Adrenal gland (tissue), 19 donors: ENCODE measurements at regions of chr15 and their contacts with region 1.

Region 1: GRCh38 chr15:82900511-82901060 is 51.9 kb downstream of the HOMER2 start:
- DNase-seq: peak in 1 of 7 donors; percentile 21
- H3K4me3 ChIP-seq: no peak overlapping the region
- H3K27ac ChIP-seq: no peak overlapping the region
- H3K4me1 ChIP-seq: no peaks in the 10 kb centered on the region
- H3K27me3 ChIP-seq: no peaks in the 10 kb centered on the region
- CTCF ChIP-seq: no peak
- POLR2A ChIP-seq: no peak

Region 2: GRCh38 chr15:82650046-82650670 is 250.4 kb before region 1 on chr15:
- intact Hi-C with region 1: no loop called
- DNase-seq: no peak
- H3K4me3 ChIP-seq: no peak overlapping the region
- H3K27ac ChIP-seq: no peak overlapping the region
- H3K4me1 ChIP-seq: peaks cover 12 to 21% of the 10 kb centered on the region in 2 donors
- H3K27me3 ChIP-seq: no peaks in the 10 kb centered on the region
- CTCF ChIP-seq: no peak
- POLR2A ChIP-seq: no peak

Region 3: GRCh38 chr15:82952158-82953081 is 51.8 kb after region 1 on chr15 and contains the start of gene HOMER2:
- intact Hi-C with region 1: loop called in 1 of 2 experiments (anchors 10 kb)
- DNase-seq: peak in 5 of 7 donors; percentile 22 to 43 (median 29)
- H3K4me3 ChIP-seq: peak within 1 kb of the TSS in 2 of 4 donors; percentile 28 to 73
- H3K27ac ChIP-seq: peak within 1 kb of the TSS in 3 of 5 donors; percentile 27 to 61 (median 30)
- H3K4me1 ChIP-seq: peaks cover 0 to 12% of the 10 kb centered on the region in 2 donors
- H3K27me3 ChIP-seq: no peaks in the 10 kb centered on the region
- CTCF ChIP-seq: peak in 1 of 6 experiments; percentile 27
- POLR2A ChIP-seq: peak in 1 of 2 donors; percentile 35
- total RNA-seq, gene HOMER2: 9.0 to 43.1 (median 26.0) TPM

Region 4: DNA sequence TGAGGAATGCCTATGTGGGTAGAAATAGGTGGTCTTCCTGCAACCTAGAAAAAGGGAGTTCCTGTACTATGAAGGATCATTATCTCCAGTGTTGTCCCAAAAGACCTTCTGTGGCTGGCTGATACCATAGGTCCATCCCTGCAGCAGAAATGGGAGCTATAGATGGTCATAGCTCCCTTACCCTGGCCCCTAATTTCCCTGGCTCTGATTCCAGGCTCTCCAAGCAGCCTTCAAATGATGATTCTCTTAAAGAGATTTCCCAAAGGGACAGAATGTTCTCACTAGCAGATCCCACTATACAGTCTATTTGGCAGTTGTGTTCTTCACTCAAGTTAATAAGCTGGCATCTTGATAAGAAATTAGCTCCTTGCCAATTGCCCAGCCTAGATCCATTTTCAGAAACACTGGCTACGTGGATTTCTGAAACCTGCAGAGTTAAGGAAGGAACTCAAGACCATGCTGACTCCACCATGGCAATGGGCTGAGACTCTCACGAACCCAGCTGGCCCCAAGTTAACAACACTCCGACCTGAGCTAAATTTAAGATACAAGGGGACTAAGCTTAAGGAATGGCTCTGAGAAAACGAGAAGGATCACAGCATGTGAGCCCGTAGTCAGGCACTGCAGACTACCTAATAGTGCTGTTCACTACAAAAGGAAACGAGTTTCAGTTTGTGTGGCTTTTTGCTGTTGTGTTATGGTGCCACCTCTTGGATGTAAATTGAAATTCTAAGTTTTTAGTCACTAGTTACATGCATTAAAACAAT is 99.5 kb after region 1 on chr15:
- intact Hi-C with region 1: no loop called
- DNase-seq: peak in 5 of 7 donors; percentile 26 to 48 (median 31)
- H3K4me3 ChIP-seq: peak overlapping the region in 2 of 4 donors; percentile 14 to 41
- H3K27ac ChIP-seq: peak overlapping the region in 3 of 5 donors; percentile 53 to 71 (median 63)
- H3K4me1 ChIP-seq: peaks cover 0 to 4% of the 10 kb centered on the region in 2 donors
- H3K27me3 ChIP-seq: no peaks in the 10 kb centered on the region
- CTCF ChIP-seq: peak; percentile 25 to 78 (median 68)
- POLR2A ChIP-seq: no peak